ENCODE measurements at regions of chr14 and their contacts with region 1.

Region 1: GRCh38 chr14:36647824-36648753 is 13.6 kb upstream of the PAX9 start:
- DNase-seq: no peak

Region 2: DNA sequence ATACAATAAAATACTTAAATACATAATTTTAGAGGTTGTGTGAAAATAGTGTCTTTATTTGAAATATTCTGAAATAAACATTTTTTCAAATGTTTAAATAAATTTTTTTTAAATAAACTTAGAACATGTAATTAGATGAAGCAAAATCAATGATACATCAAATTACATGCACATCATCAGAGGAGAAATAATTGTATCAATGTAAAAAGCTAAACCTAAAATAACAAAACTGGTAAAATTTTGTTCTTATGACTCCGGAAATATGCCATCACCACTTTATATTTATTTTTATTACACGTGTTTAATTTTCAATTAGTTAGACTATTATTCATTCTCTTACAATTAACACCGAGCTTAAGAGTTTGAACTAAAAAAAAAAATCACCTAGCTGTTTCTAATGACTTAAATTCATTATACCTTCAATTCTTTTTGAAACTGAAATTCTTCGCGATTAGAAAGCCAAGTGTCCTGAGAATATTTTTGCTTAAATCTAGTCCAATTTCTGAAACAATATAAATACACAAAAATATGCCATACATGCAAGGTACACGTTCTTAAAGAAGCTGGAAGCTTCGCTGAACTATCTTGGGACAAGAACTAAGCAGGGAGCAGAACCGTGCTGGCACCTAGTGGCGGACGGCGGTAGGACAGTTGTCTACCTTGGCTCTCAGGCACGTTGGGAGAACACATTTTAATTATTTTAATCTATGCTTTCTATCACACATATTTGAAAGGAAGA is 293.9 kb after region 1 on chr14:
- intact Hi-C with region 1: loop called in 1 of 2 experiments (anchors 10 kb)
- DNase-seq: peak; percentile 87